OCI-LY7 (cell line): ENCODE measurements at regions of chr11 and their contacts with region 1.

Region 1: DNA sequence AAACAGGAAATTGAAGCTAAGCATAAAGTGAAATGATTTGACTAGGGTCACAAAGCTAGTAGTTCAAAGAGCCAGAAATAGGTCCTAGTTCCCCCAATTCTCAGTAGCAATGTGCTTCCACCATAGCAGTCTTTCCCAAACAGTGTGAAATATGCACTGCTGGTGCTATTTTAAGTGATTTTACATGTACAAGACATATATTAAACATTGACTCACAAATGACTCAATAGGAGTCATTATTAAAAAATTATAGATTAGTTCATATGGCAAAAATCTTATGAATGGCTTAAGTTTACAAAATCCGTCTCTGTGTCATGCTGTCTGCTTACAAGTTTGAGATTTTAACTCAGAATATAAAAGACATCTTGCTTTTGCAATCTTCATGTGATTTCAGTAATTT is 21.4 kb downstream of the KIF18A start:
- DNase-seq: no peak
- H3K4me3 ChIP-seq: no peak overlapping the region
- H3K27ac ChIP-seq: peak overlapping the region; percentile 31
- H3K4me1 ChIP-seq: peaks cover 10% of the 10 kb centered on the region
- CTCF ChIP-seq: no peak

Region 2: GRCh38 chr11:28049338-28050216 is 37.0 kb before region 1 on chr11:
- CTCF ChIA-PET with region 1: no interaction called
- POLR2A ChIA-PET with region 1: no interaction called
- intact Hi-C with region 1: loop called (anchors 5 kb)
- DNase-seq: no peak
- H3K4me3 ChIP-seq: no peak overlapping the region
- H3K27ac ChIP-seq: no peak overlapping the region
- H3K4me1 ChIP-seq: no peaks in the 10 kb centered on the region
- CTCF ChIP-seq: no peak

Region 3: GRCh38 chr11:28072321-28072720 is 14.2 kb before region 1 on chr11:
- CTCF ChIA-PET with region 1: no interaction called
- POLR2A ChIA-PET with region 1: interaction called, 21 read pairs
- intact Hi-C with region 1: no loop called
- DNase-seq: no peak
- H3K4me3 ChIP-seq: no peak overlapping the region
- H3K27ac ChIP-seq: no peak overlapping the region
- H3K4me1 ChIP-seq: no peaks in the 10 kb centered on the region
- CTCF ChIP-seq: no peak

Region 4: GRCh38 chr11:28107748-28108618 is 21.4 kb after region 1 on chr11 and contains the starts of genes KIF18A and METTL15:
- CTCF ChIA-PET with region 1: no interaction called
- POLR2A ChIA-PET with region 1: interaction called, 28 read pairs
- intact Hi-C with region 1: no loop called
- DNase-seq: peak; percentile 99
- H3K4me3 ChIP-seq: peak within 1 kb of the TSS; percentile 93
- H3K27ac ChIP-seq: peak within 1 kb of the TSS; percentile 82
- H3K4me1 ChIP-seq: peaks cover 40% of the 10 kb centered on the region
- CTCF ChIP-seq: no peak
- total RNA-seq, gene KIF18A: 36.4 and 41.5 TPM in 2 replicates
- total RNA-seq, gene METTL15: 11.7 and 18.9 TPM in 2 replicates

Region 5: DNA sequence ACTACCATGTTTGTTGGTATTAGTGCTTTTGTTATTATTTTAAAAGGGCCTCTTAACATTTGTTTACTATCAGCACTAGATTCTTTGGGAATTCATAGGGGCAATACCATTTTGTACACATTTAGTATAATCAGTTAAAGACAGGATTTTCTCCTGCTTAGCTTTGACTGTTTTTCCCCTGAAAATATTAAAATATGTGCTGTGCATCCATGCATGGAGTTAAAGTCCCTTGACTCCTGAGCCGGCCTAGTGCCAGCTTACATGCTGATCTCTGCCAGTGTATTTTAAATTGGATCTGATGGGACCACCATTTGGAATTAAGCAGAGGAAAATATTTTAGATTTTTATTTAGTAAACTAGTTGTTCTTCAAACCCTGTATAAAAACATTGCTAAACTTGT is 183.0 kb after region 1 on chr11:
- CTCF ChIA-PET with region 1: no interaction called
- POLR2A ChIA-PET with region 1: no interaction called
- intact Hi-C with region 1: no loop called
- DNase-seq: no peak
- H3K4me3 ChIP-seq: no peak overlapping the region
- H3K27ac ChIP-seq: no peak overlapping the region
- H3K4me1 ChIP-seq: no peaks in the 10 kb centered on the region
- CTCF ChIP-seq: no peak